Heart right ventricle (tissue), 16 donors: ENCODE measurements at regions of chr12 and their contacts with region 1.

Region 1: DNA sequence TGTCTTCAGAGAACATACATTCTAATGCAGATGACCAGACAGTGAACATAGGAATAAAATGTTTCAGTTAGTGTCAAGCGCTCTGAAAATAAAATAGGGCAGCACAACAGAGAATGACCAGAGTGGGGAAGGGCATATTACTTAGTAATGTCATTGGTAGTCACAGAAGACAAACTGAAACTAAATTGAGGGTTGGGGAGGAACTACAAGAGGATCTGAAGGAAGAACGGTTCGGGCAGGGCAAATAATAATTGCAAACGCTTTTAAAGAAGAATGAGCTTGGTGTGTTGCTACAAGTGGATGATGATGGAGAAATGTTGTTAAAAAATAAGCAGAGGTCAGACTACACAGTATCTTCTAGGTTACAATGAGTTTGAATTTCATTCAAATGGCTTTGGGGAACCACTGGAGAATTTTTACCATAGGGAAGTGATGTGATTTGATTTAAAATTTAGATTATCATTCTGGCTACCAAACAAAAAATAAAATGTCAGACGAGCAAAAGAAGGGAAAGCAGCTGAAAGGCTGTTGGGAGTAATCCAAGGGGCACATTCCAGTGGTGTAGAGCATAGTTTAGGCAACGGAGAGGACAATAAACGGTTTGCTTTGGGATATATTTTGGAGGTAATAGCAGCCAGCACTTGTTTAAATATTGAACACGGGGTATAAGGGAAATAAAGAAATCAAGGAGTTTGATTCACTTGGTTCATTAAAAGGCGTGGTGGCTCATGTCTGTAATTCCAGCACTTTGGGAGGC is 56.3 kb upstream of the SLC6A13 start:
- DNase-seq: no peak
- ATAC-seq: no peak
- H3K4me3 ChIP-seq: no peak overlapping the region
- H3K27ac ChIP-seq: no peak overlapping the region
- H3K4me1 ChIP-seq: no peaks in the 10 kb centered on the region
- H3K27me3 ChIP-seq: no peaks in the 10 kb centered on the region
- CTCF ChIP-seq: no peak

Region 2: DNA sequence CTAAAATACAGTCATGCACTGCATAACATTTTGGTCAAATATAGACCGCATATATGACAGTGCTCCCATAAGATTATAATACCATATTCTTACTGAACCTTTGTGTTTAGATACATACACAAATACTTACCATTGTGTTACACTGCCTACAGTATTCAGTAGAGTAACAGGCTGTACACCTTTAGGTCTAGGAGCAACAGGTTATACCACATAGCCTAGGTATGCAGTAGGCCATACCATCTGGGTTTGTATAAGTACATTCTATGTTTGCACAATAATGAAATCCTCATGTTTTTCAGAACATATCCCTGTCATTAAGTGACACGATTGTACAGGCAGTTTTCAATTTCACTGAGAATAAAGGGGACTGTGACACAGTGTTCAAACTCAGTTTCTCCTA is 47.9 kb after region 1 on chr12:
- intact Hi-C with region 1: loop called in 1 of 10 experiments (anchors 10 kb)
- DNase-seq: no peak
- ATAC-seq: no peak
- H3K4me3 ChIP-seq: no peak overlapping the region
- H3K27ac ChIP-seq: no peak overlapping the region
- H3K4me1 ChIP-seq: no peaks in the 10 kb centered on the region
- H3K27me3 ChIP-seq: no peaks in the 10 kb centered on the region
- CTCF ChIP-seq: no peak